ENCODE measurements at regions of chr17 and their contacts with region 1.

Region 1: DNA sequence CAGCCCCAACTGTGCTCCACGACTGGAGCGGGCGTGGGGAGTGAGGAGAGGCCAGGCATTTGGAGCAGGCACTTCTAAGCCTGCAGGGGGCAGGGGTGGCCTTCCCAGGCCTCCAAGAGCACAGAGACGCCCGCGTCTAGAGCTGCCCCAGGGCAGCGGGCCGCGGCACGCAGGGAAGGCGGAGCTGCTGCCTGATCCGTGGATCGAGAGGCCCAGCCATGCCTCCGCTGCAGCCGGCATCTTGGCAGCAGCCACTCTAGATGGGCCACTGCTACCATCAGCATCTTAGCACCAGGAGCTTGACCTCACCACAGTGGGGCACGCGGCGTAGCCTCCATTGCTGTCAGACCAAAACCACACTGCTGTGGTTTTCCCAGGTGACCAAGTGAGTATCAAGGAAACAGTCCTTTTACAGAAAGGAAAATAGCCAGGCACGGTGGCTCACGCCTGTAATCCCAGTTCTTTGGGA is 20.4 kb upstream of the WDR45B start:
- DNase-seq: peak in 1 of 2 experiments; percentile 60
- H3K4me3 ChIP-seq: no peak overlapping the region
- H3K27ac ChIP-seq: no peak overlapping the region
- H3K4me1 ChIP-seq: no peaks in the 10 kb centered on the region
- H3K27me3 ChIP-seq: no peaks in the 10 kb centered on the region
- CTCF ChIP-seq: peak; percentile 50

Region 2: GRCh38 chr17:81941790-81942553 is 726.7 kb before region 1 on chr17:
- CTCF ChIA-PET with region 1: no interaction called
- POLR2A ChIA-PET with region 1: no interaction called
- intact Hi-C with region 1: no loop called
- DNase-seq: no peak
- H3K4me3 ChIP-seq: no peak overlapping the region
- H3K27ac ChIP-seq: no peak overlapping the region
- H3K4me1 ChIP-seq: no peaks in the 10 kb centered on the region
- H3K27me3 ChIP-seq: no peaks in the 10 kb centered on the region
- CTCF ChIP-seq: no peak

Region 3: DNA sequence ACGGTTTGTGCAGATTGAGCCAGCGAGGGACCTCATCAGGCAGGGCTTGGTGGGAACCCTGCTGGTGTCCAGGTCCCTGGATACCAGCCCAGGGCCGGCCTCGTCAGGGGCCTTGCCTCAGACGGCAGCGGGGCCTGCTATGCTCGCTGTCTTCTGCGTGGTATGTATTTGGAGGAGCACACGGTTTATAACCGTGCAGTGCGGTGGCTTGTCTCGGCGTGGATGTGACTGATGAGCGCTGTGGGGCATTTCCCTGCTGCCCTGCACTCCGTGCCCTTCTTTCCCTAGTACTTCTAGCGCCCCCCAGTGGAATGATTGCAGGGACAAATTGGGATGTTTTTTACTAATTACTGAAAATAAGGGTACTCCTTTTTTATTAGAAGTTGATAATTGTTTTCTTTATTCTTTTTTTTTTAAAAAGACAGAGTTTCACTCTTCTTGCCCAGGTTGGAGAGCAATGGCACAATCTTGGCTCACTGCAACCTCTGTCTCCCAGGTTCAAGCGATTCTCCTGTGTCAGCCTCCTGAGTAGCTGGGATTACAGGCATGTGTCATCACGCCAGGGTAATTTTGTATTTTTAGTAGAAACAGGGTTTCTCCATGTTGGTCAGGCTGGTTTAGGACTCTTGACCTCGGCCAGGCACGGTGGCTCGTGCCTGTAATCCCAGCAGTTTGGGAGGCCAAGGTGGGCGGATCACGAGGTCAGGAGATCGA is 98.5 kb after region 1 on chr17:
- CTCF ChIA-PET with region 1: interaction called, 6 read pairs
- POLR2A ChIA-PET with region 1: no interaction called
- intact Hi-C with region 1: loop called (anchors 2 kb)
- DNase-seq: peak in 1 of 2 experiments; percentile 44
- H3K4me3 ChIP-seq: no peak overlapping the region
- H3K27ac ChIP-seq: no peak overlapping the region
- H3K4me1 ChIP-seq: no peaks in the 10 kb centered on the region
- H3K27me3 ChIP-seq: no peaks in the 10 kb centered on the region
- CTCF ChIP-seq: peak; percentile 72

Measured in PC-9 (cell line).